Mucosa of descending colon (tissue), 3 donors: ENCODE measurements at regions of chr11 and their contacts with region 1.

Region 1: GRCh38 chr11:59802639-59803176 is 7.9 kb downstream of the MRPL16 start:
- DNase-seq: peak in 1 of 3 donors; percentile 86
- ATAC-seq: peak; percentile 60
- H3K4me3 ChIP-seq: no peak overlapping the region
- H3K4me1 ChIP-seq: peaks cover 22% of the 10 kb centered on the region
- CTCF ChIP-seq: peak; percentile 28

Region 2: GRCh38 chr11:59753650-59754493 is 48.8 kb before region 1 on chr11:
- intact Hi-C with region 1: loop called (anchors 2 to 5 kb)
- DNase-seq: peak; percentile 89 to 95 (median 91)
- ATAC-seq: peak; percentile 68
- H3K4me3 ChIP-seq: peak overlapping the region; percentile 80
- H3K4me1 ChIP-seq: peaks cover 28% of the 10 kb centered on the region
- CTCF ChIP-seq: peak; percentile 88

Region 3: GRCh38 chr11:59944720-59945119 is 142.0 kb after region 1 on chr11:
- intact Hi-C with region 1: no loop called
- DNase-seq: no peak
- ATAC-seq: no peak
- H3K4me3 ChIP-seq: no peak overlapping the region
- H3K4me1 ChIP-seq: no peaks in the 10 kb centered on the region
- CTCF ChIP-seq: no peak

Region 4: GRCh38 chr11:59967677-59968394 is 165.1 kb after region 1 on chr11:
- intact Hi-C with region 1: no loop called
- DNase-seq: no peak
- ATAC-seq: no peak
- H3K4me3 ChIP-seq: no peak overlapping the region
- H3K4me1 ChIP-seq: peaks cover 4% of the 10 kb centered on the region
- CTCF ChIP-seq: no peak